ENCODE measurements at regions of chr17 and their contacts with region 1.

Region 1: GRCh38 chr17:82716203-82717010 is at the start of gene FN3KRP:
- DNase-seq: peak; percentile 94
- H3K4me3 Mint-ChIP-seq: peak within 1 kb of the TSS; percentile 89
- H3K27ac Mint-ChIP-seq: peak within 1 kb of the TSS; percentile 57
- H3K4me1 Mint-ChIP-seq: peaks cover 15% of the 10 kb centered on the region
- H3K27me3 Mint-ChIP-seq: no peaks in the 10 kb centered on the region
- CTCF ChIP-seq: no peak
- total RNA-seq, gene FN3KRP: 21.5 and 24.4 TPM in 2 replicates

Region 2: GRCh38 chr17:82668631-82669099 is 47.7 kb before region 1 on chr17:
- CTCF ChIA-PET with region 1: no interaction called
- POLR2A ChIA-PET with region 1: no interaction called
- intact Hi-C with region 1: no loop called
- DNase-seq: peak; percentile 30
- H3K4me3 Mint-ChIP-seq: no peak overlapping the region
- H3K27ac Mint-ChIP-seq: no peak overlapping the region
- H3K4me1 Mint-ChIP-seq: no peaks in the 10 kb centered on the region
- H3K27me3 Mint-ChIP-seq: no peaks in the 10 kb centered on the region
- CTCF ChIP-seq: peak; percentile 32

Region 3: DNA sequence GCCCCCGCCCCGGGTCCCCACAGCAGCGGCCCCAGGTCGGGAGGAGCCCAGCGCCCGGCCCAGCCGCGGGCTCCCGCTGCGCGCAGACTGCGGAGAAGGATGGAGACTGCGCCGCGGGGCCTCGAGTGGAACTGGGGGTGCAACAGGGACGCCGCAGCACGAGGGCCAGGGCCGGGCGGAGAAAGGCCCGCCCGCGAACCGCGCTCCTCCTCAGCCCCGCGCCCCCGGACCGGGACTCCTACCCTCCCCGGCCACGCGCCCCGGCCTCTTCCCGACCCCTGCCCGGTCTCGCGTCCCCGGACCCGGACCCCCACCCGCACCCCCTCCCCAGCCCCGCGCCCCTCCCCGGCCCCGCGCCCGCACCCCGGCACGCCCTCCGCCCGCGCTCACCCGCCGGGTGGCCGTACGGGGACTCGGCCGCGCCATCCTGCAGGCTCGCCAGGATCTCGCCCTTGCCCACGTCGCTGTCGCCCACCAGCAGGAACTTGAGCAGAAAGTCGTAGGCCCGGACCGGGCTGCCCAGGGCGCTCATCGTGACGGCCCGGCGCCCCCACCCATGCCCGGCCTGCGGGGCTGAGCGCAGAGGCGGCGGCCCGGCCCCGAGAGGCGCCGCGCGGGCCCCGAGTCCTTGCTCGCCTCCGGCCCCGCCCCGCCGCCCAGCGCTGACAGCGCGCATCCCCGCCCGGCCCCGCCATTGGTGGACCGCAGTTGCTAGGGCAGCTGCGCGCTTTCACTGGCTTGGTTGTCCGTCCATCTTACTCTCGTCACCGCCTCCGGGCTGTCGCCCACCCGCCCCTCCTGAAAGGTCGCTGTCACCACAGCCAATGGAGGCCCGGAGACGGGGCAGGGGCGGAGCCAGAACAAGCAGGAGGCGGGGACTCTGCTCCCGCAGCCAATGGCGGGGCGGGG is 18.1 kb before region 1 on chr17 and contains the start of gene RAB40B:
- CTCF ChIA-PET with region 1: no interaction called
- POLR2A ChIA-PET with region 1: interaction called, 11 read pairs
- intact Hi-C with region 1: no loop called
- DNase-seq: peak; percentile 97
- H3K4me3 Mint-ChIP-seq: peak within 1 kb of the TSS; percentile 76
- H3K27ac Mint-ChIP-seq: no peak within 1 kb of the TSS
- H3K4me1 Mint-ChIP-seq: no peaks in the 10 kb centered on the region
- H3K27me3 Mint-ChIP-seq: no peaks in the 10 kb centered on the region
- CTCF ChIP-seq: no peak
- total RNA-seq, gene RAB40B: 5.9 and 6.3 TPM in 2 replicates

Region 4: GRCh38 chr17:82816358-82817149 is 100.1 kb after region 1 on chr17:
- CTCF ChIA-PET with region 1: no interaction called
- POLR2A ChIA-PET with region 1: no interaction called
- intact Hi-C with region 1: no loop called
- DNase-seq: no peak
- H3K4me3 Mint-ChIP-seq: no peak overlapping the region
- H3K27ac Mint-ChIP-seq: no peak overlapping the region
- H3K4me1 Mint-ChIP-seq: no peaks in the 10 kb centered on the region
- H3K27me3 Mint-ChIP-seq: no peaks in the 10 kb centered on the region
- CTCF ChIP-seq: no peak